Activated CD8-positive, alpha-beta T cell treated with anti-CD3 and anti-CD28 coated beads for 36 hours (primary cell): ENCODE measurements at regions of chr19 and their contacts with region 1.

Region 1: GRCh38 chr19:35154525-35155406 is at the start of gene FXYD5:
- DNase-seq: peak; percentile 92
- ATAC-seq: peak; percentile 78
- H3K4me3 Mint-ChIP-seq: peak within 1 kb of the TSS; percentile 95
- H3K27ac Mint-ChIP-seq: peak within 1 kb of the TSS; percentile 99
- H3K4me1 Mint-ChIP-seq: peaks cover 49% of the 10 kb centered on the region
- H3K27me3 Mint-ChIP-seq: no peaks in the 10 kb centered on the region
- CTCF ChIP-seq: no peak
- total RNA-seq, gene FXYD5: 225 to 241 TPM

Region 2: DNA sequence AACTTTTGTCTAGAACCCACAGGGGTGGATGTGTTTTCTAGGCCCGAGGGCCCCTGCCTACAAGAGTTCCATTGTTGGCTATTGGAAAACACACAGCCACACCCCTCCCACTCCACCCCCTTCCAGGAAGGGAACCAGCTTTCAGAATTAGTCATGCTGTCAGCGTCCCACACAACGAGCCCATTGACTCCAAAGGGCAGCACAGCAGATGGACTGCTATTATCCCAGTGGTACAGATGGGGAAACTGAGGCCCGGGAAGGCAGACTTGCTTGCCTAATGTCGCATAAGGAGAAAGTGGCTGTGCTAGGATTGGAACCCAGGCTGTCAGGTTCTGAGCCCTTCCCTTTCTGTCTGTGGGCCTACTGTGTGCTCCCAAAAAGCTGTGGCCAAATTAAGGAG is 47.2 kb before region 1 on chr19:
- CTCF ChIA-PET with region 1: no interaction called
- POLR2A ChIA-PET with region 1: no interaction called
- intact Hi-C with region 1: no loop called
- DNase-seq: no peak
- ATAC-seq: no peak
- H3K4me3 Mint-ChIP-seq: no peak overlapping the region
- H3K27ac Mint-ChIP-seq: no peak overlapping the region
- H3K4me1 Mint-ChIP-seq: peaks cover 8% of the 10 kb centered on the region
- H3K27me3 Mint-ChIP-seq: no peaks in the 10 kb centered on the region
- CTCF ChIP-seq: no peak

Region 3: DNA sequence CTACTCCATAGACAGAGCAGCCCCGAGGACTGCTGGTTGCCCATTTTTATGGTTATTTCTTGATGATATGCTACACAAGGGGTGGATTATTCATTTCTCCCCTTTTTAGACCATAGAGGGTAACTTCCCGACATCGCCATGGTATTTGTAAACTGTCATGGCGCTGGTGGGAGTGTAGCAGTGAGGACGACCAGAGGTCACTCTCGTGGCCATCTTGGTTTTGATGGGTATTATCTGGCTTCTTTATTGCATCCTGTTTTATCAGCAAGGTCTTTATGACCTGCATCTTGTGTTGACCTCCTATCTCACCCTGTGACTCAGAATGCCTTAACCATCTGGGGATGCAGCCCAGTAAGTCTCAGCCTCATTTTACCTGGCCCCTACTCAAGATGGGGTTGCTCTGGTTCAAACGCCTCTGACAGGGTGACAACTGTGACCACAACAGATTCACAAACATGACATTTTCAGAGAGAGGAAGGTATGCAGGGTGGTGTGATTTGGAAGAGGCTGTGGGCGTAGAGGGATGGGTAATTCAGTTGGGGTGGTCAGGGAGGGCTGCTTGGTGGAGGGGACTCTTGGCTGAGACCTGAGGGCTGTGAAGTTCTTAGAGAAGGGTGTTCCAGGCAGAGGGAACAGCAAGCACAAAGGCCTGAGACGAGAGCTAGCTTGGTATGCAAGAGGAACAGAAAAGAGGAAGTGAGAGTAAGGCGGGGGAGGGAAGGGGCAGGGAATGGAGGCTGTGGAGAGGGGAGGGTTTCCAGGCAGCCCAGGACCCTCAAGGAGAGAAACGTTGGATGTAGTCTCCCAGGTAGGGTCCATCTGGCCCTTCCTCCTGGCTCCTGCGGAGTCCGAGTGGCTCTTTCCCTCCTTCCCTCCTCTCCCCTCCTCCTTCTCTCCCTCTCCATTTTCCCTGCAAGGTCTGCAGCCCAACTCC is 50.3 kb after region 1 on chr19:
- CTCF ChIA-PET with region 1: interaction called, 9 read pairs
- POLR2A ChIA-PET with region 1: interaction called, 11 read pairs
- intact Hi-C with region 1: no loop called
- DNase-seq: peak; percentile 62
- ATAC-seq: peak; percentile 52
- H3K4me3 Mint-ChIP-seq: peak overlapping the region; percentile 3
- H3K27ac Mint-ChIP-seq: peak overlapping the region; percentile 94
- H3K4me1 Mint-ChIP-seq: peaks cover 78% of the 10 kb centered on the region
- H3K27me3 Mint-ChIP-seq: no peaks in the 10 kb centered on the region
- CTCF ChIP-seq: no peak

Region 4: DNA sequence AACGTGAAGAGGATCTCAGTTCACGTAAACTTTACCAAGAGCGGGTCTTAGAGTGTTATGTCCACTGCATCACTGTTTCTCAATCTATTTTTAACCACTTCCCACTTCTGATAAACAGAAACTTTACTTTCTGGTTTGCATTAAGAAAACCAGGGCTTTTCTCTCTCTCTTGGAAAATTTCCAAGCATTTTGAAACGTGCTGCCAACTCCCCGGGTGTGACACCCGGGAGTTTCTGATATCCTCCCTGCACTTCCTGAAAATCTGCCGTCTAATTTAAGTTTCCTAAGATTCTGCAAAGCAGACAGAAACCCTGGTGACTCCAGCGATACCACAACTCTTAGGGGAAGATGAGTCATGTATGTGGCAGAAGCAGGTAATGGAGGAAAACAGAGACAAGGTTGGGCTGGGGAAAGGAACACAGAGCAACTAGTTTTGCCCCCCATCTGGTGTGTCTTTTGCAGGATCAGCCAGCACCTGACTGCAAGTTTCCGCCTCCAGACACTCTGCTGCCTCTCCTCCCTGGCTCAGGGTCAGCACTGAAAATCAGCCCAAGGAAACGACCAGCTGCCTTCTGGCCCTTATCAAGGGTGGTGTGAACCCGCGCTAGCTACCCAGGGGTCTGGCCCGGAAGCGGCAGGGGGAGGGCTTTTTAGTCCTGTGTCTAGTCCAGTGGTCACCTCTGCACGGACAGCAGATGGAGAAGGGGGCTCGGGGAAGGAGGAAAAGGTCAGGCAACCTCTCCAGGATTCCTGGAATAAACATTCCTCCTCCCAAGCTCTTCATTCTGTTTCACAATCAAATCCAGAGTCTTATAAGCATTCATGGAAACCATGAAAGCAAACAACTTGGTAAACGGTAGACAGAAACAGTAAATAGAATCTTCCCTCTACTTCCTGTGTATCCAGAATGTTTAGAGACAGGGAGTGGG is 282.0 kb after region 1 on chr19:
- CTCF ChIA-PET with region 1: no interaction called
- POLR2A ChIA-PET with region 1: no interaction called
- intact Hi-C with region 1: no loop called
- DNase-seq: peak; percentile 60
- ATAC-seq: peak; percentile 93
- H3K4me3 Mint-ChIP-seq: peak overlapping the region; percentile 14
- H3K27ac Mint-ChIP-seq: peak overlapping the region; percentile 26
- H3K4me1 Mint-ChIP-seq: peaks cover 19% of the 10 kb centered on the region
- H3K27me3 Mint-ChIP-seq: peaks cover 13% of the 10 kb centered on the region
- CTCF ChIP-seq: no peak